CD4-positive, alpha-beta memory T cell (primary cell): ENCODE measurements at regions of chr6 and their contacts with region 1.

Region 1: GRCh38 chr6:30590994-30591393 is 19.8 kb downstream of the ABCF1 start:
- DNase-seq: no peak
- H3K4me3 ChIP-seq: no peak overlapping the region
- H3K4me3 Mint-ChIP-seq: no peak overlapping the region
- H3K27ac ChIP-seq: no peak overlapping the region
- H3K27ac Mint-ChIP-seq: peak overlapping the region in 3 of 7 donors; percentile 30 to 86 (median 48)
- H3K4me1 ChIP-seq: no peaks in the 10 kb centered on the region
- H3K4me1 Mint-ChIP-seq: peaks cover 0 to 7% (median 4%) of the 10 kb centered on the region in 4 donors
- H3K27me3 ChIP-seq: no peaks in the 10 kb centered on the region
- H3K27me3 Mint-ChIP-seq: no peaks in the 10 kb centered on the region

Region 2: GRCh38 chr6:30578051-30578450 is 12.9 kb before region 1 on chr6:
- CTCF ChIA-PET with region 1: interaction called, 55 read pairs
- POLR2A ChIA-PET with region 1: interaction called, 3 read pairs
- intact Hi-C with region 1: no loop called
- DNase-seq: no peak
- H3K4me3 ChIP-seq: no peak overlapping the region
- H3K4me3 Mint-ChIP-seq: no peak overlapping the region
- H3K27ac ChIP-seq: no peak overlapping the region
- H3K27ac Mint-ChIP-seq: peak overlapping the region in 3 of 7 donors; percentile 32 to 70 (median 54)
- H3K4me1 ChIP-seq: peaks cover 18% of the 10 kb centered on the region
- H3K4me1 Mint-ChIP-seq: peaks cover 26 to 30% (median 27%) of the 10 kb centered on the region in 4 donors
- H3K27me3 ChIP-seq: no peaks in the 10 kb centered on the region
- H3K27me3 Mint-ChIP-seq: no peaks in the 10 kb centered on the region

Region 3: DNA sequence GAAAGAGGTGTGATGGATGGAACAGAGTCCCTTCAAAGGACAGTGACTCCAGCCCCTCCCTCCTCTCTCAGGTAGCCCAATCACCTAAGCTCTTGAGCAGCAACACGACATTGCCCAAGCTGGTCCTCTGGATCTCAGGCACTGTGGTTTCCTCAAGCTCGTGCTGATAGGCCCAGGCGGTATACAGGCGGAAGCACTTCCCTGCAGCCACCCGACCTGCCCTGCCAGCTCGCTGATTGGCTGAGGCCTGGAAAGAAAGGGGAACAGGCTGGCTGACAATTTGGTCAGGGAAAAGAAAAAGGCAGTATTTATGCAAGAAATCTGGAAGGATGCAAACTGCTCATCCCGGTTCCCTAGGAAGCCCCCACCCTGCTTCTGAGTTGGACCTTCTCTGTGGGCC is 65.5 kb after region 1 on chr6:
- CTCF ChIA-PET with region 1: no interaction called
- POLR2A ChIA-PET with region 1: no interaction called
- intact Hi-C with region 1: no loop called
- DNase-seq: no peak
- H3K4me3 ChIP-seq: no peak overlapping the region
- H3K4me3 Mint-ChIP-seq: no peak overlapping the region
- H3K27ac ChIP-seq: no peak overlapping the region
- H3K27ac Mint-ChIP-seq: no peak overlapping the region
- H3K4me1 ChIP-seq: no peaks in the 10 kb centered on the region
- H3K4me1 Mint-ChIP-seq: peaks cover 0 to 3% (median 0%) of the 10 kb centered on the region in 4 donors
- H3K27me3 ChIP-seq: no peaks in the 10 kb centered on the region
- H3K27me3 Mint-ChIP-seq: no peaks in the 10 kb centered on the region

Region 4: DNA sequence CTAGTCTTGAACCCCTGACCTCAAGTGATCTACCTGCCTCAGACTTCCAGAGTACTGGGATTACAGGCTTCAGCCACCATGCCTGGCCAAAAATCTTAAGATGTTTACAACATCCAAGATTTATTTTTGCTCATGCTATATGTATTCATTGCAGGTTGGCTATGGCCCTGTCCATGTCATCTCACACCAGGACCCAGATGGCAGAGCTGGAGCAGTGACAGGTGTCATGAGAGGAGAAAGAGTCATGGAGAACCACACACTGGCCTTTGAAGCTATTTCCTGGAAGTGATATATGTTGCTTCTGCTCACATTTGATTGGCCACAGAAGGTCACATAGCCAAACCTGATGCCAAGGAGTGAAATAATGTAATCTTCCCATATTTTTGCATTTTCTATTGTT is 279.6 kb after region 1 on chr6:
- CTCF ChIA-PET with region 1: no interaction called
- POLR2A ChIA-PET with region 1: no interaction called
- intact Hi-C with region 1: no loop called
- DNase-seq: no peak
- H3K4me3 ChIP-seq: no peak overlapping the region
- H3K4me3 Mint-ChIP-seq: no peak overlapping the region
- H3K27ac ChIP-seq: no peak overlapping the region
- H3K27ac Mint-ChIP-seq: no peak overlapping the region
- H3K4me1 ChIP-seq: no peaks in the 10 kb centered on the region
- H3K4me1 Mint-ChIP-seq: peaks cover 0 to 16% (median 5%) of the 10 kb centered on the region in 4 donors
- H3K27me3 ChIP-seq: no peaks in the 10 kb centered on the region
- H3K27me3 Mint-ChIP-seq: no peaks in the 10 kb centered on the region